ENCODE measurements at regions of chr1 and their contacts with region 1.

Region 1: GRCh38 chr1:160251687-160252526 is 10.4 kb downstream of the DCAF8 start:
- DNase-seq: no peak
- H3K4me3 ChIP-seq: no peak overlapping the region
- H3K27ac ChIP-seq: no peak overlapping the region
- H3K4me1 ChIP-seq: no peaks in the 10 kb centered on the region; a peak in 1 of 7 replicates
- H3K27me3 ChIP-seq: no peaks in the 10 kb centered on the region
- CTCF ChIP-seq: peak in 2 of 3 experiments; percentile 76 to 78; a peak in 3 of 4 replicates
- EP300 ChIP-seq: no peak
- POLR2A ChIP-seq: no peak
- RAD21 ChIP-seq: peak; percentile 84 to 91

Region 2: GRCh38 chr1:160117709-160118183 is 134.2 kb before region 1 on chr1:
- CTCF ChIA-PET with region 1: interaction called, 13 read pairs
- POLR2A ChIA-PET with region 1: interaction called, 3 read pairs
- DNase-seq: no peak
- H3K4me3 ChIP-seq: peak overlapping the region in 1 of 4 experiments; percentile 59; a peak in 3 of 8 replicates
- H3K27ac ChIP-seq: no peak overlapping the region
- H3K4me1 ChIP-seq: peaks cover 15 to 44% (median 32%) of the 10 kb centered on the region in 4 experiments
- H3K27me3 ChIP-seq: no peaks in the 10 kb centered on the region; a peak in 1 of 7 replicates
- CTCF ChIP-seq: no peak
- EP300 ChIP-seq: no peak
- POLR2A ChIP-seq: no peak
- RAD21 ChIP-seq: no peak

Region 3: DNA sequence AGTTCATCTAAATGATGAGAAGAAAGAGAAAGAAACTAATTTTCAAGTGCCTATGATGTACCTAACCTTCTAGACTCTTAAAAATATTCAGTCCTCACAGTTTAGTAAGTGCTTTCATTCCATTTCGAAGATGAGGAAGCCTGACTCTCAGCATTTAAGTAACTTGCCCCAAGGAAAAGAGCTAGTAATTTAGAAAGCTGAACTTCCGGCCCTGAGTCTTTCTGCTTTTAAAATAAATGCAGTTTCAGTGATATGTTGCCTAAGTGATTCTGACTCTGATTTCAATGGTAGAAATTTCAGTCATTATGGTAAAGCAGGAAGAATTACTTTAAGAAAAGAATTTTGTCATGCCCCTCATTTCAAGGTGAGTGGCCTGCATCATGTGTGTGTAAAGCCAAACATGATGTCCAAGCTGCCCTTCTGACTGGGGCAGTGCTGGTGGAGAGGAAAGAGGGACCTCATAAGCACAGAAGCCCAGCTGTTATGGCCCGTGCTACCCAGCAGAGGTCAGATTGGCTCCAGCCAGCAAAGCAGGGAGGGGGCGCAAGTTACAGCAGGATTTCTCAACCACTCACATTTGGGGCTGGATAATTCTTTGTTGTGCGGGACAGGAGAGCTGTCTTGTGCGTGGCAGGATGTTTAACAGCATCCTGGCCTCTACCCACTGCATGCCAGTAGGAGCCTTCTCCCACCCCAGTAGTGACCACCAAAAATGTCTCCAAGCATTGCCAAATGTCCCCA is 89.8 kb before region 1 on chr1:
- CTCF ChIA-PET with region 1: interaction called, 33 read pairs
- POLR2A ChIA-PET with region 1: interaction called, 6 read pairs
- DNase-seq: peak; percentile 54 to 73
- H3K4me3 ChIP-seq: no peak overlapping the region
- H3K27ac ChIP-seq: no peak overlapping the region
- H3K4me1 ChIP-seq: peaks cover 0 to 3% (median 1%) of the 10 kb centered on the region in 4 experiments; a peak in 3 of 7 replicates
- H3K27me3 ChIP-seq: no peaks in the 10 kb centered on the region; a peak in 2 of 7 replicates
- CTCF ChIP-seq: peak; percentile 87 to 98 (median 95)
- EP300 ChIP-seq: no peak
- POLR2A ChIP-seq: no peak
- RAD21 ChIP-seq: peak; percentile 93 to 96

Region 4: DNA sequence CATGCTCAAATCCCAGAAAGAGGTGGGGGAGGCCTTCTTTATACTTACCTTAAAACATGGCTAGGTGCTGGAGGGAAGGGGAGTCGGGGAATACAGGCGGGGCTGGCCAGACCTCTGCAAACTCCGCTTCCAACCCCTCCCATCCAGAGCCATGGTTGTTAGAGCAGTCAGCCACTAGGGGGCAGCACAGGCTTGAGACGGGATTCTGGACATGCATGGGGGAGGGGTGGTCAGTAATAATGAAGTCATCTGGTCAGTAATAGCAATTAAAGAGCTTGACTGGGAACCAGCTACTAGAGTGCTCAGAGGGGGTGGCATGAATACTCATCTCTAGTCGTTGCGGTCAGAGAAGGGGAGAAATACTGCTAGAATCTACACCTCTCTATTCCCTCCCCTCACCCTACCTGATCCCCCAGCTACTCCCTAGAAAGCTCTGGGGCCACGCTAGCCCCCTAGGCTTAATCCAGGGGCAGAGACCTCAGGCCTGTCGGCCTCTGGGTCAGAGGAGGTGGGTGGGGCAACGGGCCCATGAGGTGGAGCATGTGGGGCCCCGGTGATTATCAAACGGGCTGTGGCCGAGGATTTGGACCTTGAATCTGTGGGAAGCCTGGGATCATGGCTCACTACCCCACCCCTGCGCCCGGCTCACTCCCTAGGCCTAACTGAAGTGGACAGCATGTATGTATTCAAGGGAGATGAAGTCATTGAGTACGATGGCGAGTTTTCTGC is 58.7 kb before region 1 on chr1:
- CTCF ChIA-PET with region 1: interaction called, 27 read pairs
- POLR2A ChIA-PET with region 1: interaction called, 3 read pairs
- DNase-seq: peak; percentile 84 to 98
- H3K4me3 ChIP-seq: 0 out of 8 replicates have a peak overlapping the region, but pooled peaks of 1 of the 4 experiments have one; percentile 12
- H3K27ac ChIP-seq: no peak overlapping the region
- H3K4me1 ChIP-seq: peaks cover 3 to 26% (median 8%) of the 10 kb centered on the region in 4 experiments; a peak in 6 of 7 replicates
- H3K27me3 ChIP-seq: no peaks in the 10 kb centered on the region; a peak in 1 of 7 replicates
- CTCF ChIP-seq: peak; percentile 94 to 95 (median 94)
- EP300 ChIP-seq: no peak
- POLR2A ChIP-seq: no peak
- RAD21 ChIP-seq: peak; percentile 95 to 96

Region 5: DNA sequence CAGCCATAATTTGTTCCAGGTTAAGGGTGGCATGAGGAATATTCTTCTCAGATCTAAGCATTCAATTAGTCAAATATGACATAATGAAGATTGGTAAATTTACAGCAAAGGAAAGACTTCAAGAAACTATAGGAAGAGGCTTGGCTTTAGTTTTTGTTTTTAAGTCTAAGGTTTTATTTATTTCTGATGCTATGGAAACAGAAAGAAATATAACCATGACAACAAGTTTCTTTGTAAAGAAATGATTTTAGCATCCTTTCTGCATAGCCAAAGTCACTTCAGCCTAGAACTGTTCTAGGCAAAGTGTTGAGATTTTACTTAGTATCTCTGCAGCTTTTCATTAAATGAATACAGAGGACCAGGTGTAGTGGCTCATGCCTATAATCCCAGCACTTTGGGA is 19.0 kb before region 1 on chr1:
- CTCF ChIA-PET with region 1: interaction called, 20 read pairs
- POLR2A ChIA-PET with region 1: no interaction called
- DNase-seq: no peak
- H3K4me3 ChIP-seq: no peak overlapping the region
- H3K27ac ChIP-seq: no peak overlapping the region
- H3K4me1 ChIP-seq: no peaks in the 10 kb centered on the region
- H3K27me3 ChIP-seq: no peaks in the 10 kb centered on the region
- CTCF ChIP-seq: no peak
- EP300 ChIP-seq: no peak
- POLR2A ChIP-seq: no peak
- RAD21 ChIP-seq: no peak

Region 6: GRCh38 chr1:160267284-160267991 is 15.5 kb after region 1 on chr1:
- CTCF ChIA-PET with region 1: interaction called, 18 read pairs
- POLR2A ChIA-PET with region 1: interaction called, 37 read pairs
- DNase-seq: no peak
- H3K4me3 ChIP-seq: no peak overlapping the region
- H3K27ac ChIP-seq: no peak overlapping the region
- H3K4me1 ChIP-seq: peaks cover 0 to 1% (median 0%) of the 10 kb centered on the region in 4 experiments; a peak in 1 of 7 replicates
- H3K27me3 ChIP-seq: no peaks in the 10 kb centered on the region; a peak in 1 of 7 replicates
- CTCF ChIP-seq: no peak
- EP300 ChIP-seq: no peak
- POLR2A ChIP-seq: no peak
- RAD21 ChIP-seq: no peak

Region 7: DNA sequence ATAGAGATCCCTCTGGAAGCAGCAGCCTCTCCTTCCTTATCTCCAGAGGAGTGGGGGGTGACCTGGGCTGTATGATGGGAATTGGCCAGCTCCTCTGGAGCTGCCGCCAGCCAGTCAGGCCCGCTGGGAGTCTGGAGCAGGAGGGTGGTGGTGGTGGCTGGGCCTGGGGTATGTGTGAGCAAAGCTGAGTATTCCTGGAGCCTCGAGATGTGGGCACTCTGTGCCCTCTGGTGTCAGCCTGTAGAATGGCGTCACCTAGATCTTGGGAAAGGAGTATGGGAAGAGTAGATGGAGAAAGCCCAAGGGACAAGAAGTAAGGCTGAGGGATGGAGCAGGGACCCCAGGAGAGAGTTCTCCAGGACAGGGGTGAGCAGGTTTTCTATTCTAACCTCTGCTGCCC is 164.5 kb after region 1 on chr1:
- CTCF ChIA-PET with region 1: no interaction called
- POLR2A ChIA-PET with region 1: no interaction called
- DNase-seq: no peak
- H3K4me3 ChIP-seq: no peak overlapping the region
- H3K27ac ChIP-seq: no peak overlapping the region
- H3K4me1 ChIP-seq: peaks cover 1 to 2% (median 2%) of the 10 kb centered on the region in 4 experiments; a peak in 6 of 7 replicates
- H3K27me3 ChIP-seq: no peaks in the 10 kb centered on the region
- CTCF ChIP-seq: peak; percentile 63 to 76 (median 69)
- EP300 ChIP-seq: no peak
- POLR2A ChIP-seq: no peak
- RAD21 ChIP-seq: peak; percentile 81 to 88

Measured in H1 (cell line).